Astrocyte of the cerebellum (primary cell): ENCODE measurements at regions of chr12 and their contacts with region 1.

Region 1: GRCh38 chr12:104748356-104749128 is 209.5 kb downstream of the SLC41A2 start:
- DNase-seq: no peak
- H3K4me3 ChIP-seq: no peak overlapping the region
- CTCF ChIP-seq: no peak

Region 2: DNA sequence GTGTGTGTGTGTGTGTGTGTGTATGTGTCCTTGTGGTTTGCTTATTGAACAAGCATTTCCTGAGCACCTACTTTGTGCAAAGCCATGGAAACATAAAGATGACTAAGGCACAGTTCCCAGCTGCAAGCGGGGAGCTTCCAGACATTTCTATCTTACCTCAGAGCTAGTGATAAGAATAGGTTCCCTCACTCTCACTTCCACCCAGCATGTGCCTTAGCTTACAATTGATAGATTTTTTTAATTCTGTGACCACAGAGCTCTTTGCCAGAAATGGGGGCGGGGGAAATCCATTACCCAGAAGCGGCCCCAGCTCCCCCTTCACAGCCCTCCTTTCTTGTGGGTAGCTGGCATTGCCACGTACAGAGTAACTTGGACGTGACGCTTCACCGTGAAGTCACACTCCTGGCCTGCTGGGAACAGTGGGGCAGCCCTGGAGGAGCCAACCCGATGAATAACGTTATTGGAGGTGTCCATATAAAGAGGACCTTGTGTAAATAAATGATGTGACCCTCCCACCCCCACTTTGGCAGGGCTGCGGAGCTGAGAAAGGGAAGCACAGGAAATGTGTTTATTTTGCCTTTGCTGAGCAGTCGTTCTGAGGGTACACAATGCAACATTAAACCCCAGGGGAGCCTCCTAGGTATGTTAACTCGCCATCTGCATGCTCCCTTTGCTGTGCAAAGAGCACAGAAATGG is 52.9 kb before region 1 on chr12:
- in situ Hi-C with region 1: no loop called
- DNase-seq: peak; percentile 94
- H3K4me3 ChIP-seq: no peak overlapping the region
- CTCF ChIP-seq: no peak

Region 3: GRCh38 chr12:104809706-104810385 is 61.3 kb after region 1 on chr12:
- in situ Hi-C with region 1: no loop called
- DNase-seq: no peak
- H3K4me3 ChIP-seq: no peak overlapping the region
- CTCF ChIP-seq: no peak

Region 4: GRCh38 chr12:104825408-104825807 is 76.9 kb after region 1 on chr12:
- in situ Hi-C with region 1: loop called (anchors 5 kb)
- DNase-seq: no peak
- H3K4me3 ChIP-seq: no peak overlapping the region
- CTCF ChIP-seq: no peak